OCI-LY7 (cell line): ENCODE measurements at regions of chr5 and their contacts with region 1.

Region 1: DNA sequence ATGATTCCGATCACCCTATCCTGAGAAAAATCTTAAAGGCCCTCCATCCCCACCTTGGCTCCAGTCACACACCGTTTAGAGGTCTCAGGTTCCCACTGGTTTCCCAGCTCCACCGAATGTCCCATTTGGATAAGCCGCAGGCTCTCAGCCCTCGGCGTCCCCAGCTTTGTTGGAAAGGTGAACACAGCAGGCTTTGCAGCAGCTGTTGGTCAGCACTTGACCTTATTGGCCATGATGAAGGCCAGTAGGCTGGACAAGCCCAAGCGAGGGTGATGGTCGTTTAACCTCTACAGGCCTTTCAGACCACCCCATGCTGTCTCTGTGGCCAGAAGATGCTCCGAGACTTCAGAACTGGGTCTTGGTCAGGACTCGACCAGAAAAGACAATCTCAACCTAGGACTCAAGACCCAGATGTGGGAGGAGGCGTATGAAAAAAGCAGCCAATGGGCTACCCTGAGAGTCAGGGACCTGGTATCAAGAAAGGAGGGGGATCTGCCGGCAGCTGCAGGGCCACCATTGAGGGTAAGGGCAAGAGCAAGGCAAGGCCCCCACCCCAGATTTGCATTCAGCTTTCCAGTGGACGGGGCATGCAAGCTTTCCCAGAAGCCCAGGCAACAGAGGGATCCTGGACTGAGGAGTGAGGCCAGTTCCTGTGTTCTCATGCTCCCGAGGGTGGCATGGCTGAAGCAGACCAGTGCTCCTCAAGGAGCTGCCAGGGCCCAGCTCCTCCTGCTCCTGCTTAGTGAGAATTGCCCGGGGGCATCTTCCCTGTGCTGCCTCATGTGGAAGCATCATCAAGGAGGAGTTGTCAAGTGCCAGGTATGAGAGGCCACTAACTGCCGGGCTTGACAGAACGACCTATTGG is 13.4 kb downstream of the UBE2QL1 start:
- DNase-seq: no peak
- H3K4me3 ChIP-seq: no peak overlapping the region
- H3K27ac ChIP-seq: no peak overlapping the region
- H3K4me1 ChIP-seq: peaks cover 19% of the 10 kb centered on the region
- CTCF ChIP-seq: no peak

Region 2: GRCh38 chr5:5475967-5476366 is 986.1 kb before region 1 on chr5:
- CTCF ChIA-PET with region 1: no interaction called
- POLR2A ChIA-PET with region 1: interaction called, 10 read pairs
- intact Hi-C with region 1: no loop called
- DNase-seq: no peak
- H3K4me3 ChIP-seq: no peak overlapping the region
- H3K27ac ChIP-seq: no peak overlapping the region
- H3K4me1 ChIP-seq: peaks cover 7% of the 10 kb centered on the region
- CTCF ChIP-seq: no peak